Naive thymus-derived CD4-positive, alpha-beta T cell (primary cell): ENCODE measurements at regions of chr1 and their contacts with region 1.

Region 1: GRCh38 chr1:235954306-235955283 is 87.9 kb upstream of the LYST start:
- DNase-seq: peak in 8 of 9 donors; percentile 25 to 44 (median 36)
- ATAC-seq: peak; percentile 91
- H3K4me3 ChIP-seq: peak overlapping the region; percentile 41
- H3K4me3 Mint-ChIP-seq: peak overlapping the region; percentile 22 to 79 (median 56)
- H3K27ac ChIP-seq: peak overlapping the region; percentile 9
- H3K27ac Mint-ChIP-seq: peak overlapping the region in 8 of 9 donors; percentile 30 to 89 (median 70)
- H3K4me1 ChIP-seq: peaks cover 30 to 32% of the 10 kb centered on the region in 2 donors
- H3K4me1 Mint-ChIP-seq: peaks cover 35 to 40% (median 39%) of the 10 kb centered on the region in 7 donors
- H3K27me3 ChIP-seq: no peaks in the 10 kb centered on the region
- H3K27me3 Mint-ChIP-seq: peaks cover 0 to 2% (median 0%) of the 10 kb centered on the region in 5 donors

Region 2: GRCh38 chr1:235910357-235911299 is 44.0 kb before region 1 on chr1:
- CTCF ChIA-PET with region 1: no interaction called
- POLR2A ChIA-PET with region 1: no interaction called
- intact Hi-C with region 1: loop called (anchors 5 kb)
- DNase-seq: peak in 1 of 9 donors; percentile 34
- ATAC-seq: peak; percentile 62
- H3K4me3 ChIP-seq: no peak overlapping the region
- H3K4me3 Mint-ChIP-seq: no peak overlapping the region
- H3K27ac ChIP-seq: no peak overlapping the region
- H3K27ac Mint-ChIP-seq: no peak overlapping the region
- H3K4me1 ChIP-seq: no peaks in the 10 kb centered on the region
- H3K4me1 Mint-ChIP-seq: peaks cover 0 to 19% (median 0%) of the 10 kb centered on the region in 7 donors
- H3K27me3 ChIP-seq: no peaks in the 10 kb centered on the region
- H3K27me3 Mint-ChIP-seq: peaks cover 0 to 2% (median 0%) of the 10 kb centered on the region in 5 donors

Region 3: GRCh38 chr1:235917267-235917811 is 37.3 kb before region 1 on chr1:
- CTCF ChIA-PET with region 1: no interaction called
- POLR2A ChIA-PET with region 1: no interaction called
- intact Hi-C with region 1: loop called in 1 of 2 experiments (anchors 5 kb)
- DNase-seq: peak in 8 of 9 donors; percentile 23 to 67 (median 42)
- ATAC-seq: peak; percentile 89
- H3K4me3 ChIP-seq: no peak overlapping the region
- H3K4me3 Mint-ChIP-seq: peak overlapping the region in 6 of 10 donors; percentile 28 to 54 (median 45)
- H3K27ac ChIP-seq: no peak overlapping the region
- H3K27ac Mint-ChIP-seq: peak overlapping the region in 7 of 9 donors; percentile 33 to 79 (median 64)
- H3K4me1 ChIP-seq: peaks cover 3 to 7% of the 10 kb centered on the region in 2 donors
- H3K4me1 Mint-ChIP-seq: peaks cover 9 to 28% (median 13%) of the 10 kb centered on the region in 7 donors
- H3K27me3 ChIP-seq: no peaks in the 10 kb centered on the region
- H3K27me3 Mint-ChIP-seq: peaks cover 0 to 2% (median 0%) of the 10 kb centered on the region in 5 donors

Region 4: DNA sequence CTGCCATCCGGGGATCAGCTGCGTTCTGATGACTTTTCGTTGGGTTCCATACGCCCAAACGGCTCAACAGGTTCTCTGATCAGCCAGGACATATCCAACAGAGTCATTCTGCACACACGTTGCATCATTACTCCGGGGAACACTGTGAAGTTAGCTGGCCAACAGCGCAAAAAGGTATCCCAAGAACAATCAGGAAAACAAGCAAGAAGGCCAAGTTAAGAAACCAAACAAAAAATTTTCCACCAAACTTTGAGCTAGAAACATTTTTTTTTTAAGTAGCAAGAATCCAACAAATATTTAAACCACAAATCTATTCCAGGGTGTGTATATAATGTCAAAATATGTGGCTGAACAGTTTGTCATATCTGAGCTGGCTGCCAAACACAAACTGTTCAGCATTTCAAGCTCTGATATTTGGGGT is 81.1 kb after region 1 on chr1:
- CTCF ChIA-PET with region 1: no interaction called
- POLR2A ChIA-PET with region 1: no interaction called
- intact Hi-C with region 1: no loop called
- DNase-seq: no peak
- ATAC-seq: no peak
- H3K4me3 ChIP-seq: no peak overlapping the region
- H3K4me3 Mint-ChIP-seq: no peak overlapping the region
- H3K27ac ChIP-seq: no peak overlapping the region
- H3K27ac Mint-ChIP-seq: no peak overlapping the region
- H3K4me1 ChIP-seq: no peaks in the 10 kb centered on the region
- H3K4me1 Mint-ChIP-seq: no peaks in the 10 kb centered on the region
- H3K27me3 ChIP-seq: no peaks in the 10 kb centered on the region
- H3K27me3 Mint-ChIP-seq: peaks cover 0 to 23% (median 0%) of the 10 kb centered on the region in 5 donors